Heart left ventricle (tissue), 16 donors: ENCODE measurements at regions of chr11 and their contacts with region 1.

Region 1: GRCh38 chr11:13216019-13216710 is 61.4 kb upstream of the BMAL1 start:
- DNase-seq: peak in 2 of 5 donors; percentile 33 to 55
- ATAC-seq: peak in 2 of 4 donors; percentile 33 to 45
- H3K4me3 ChIP-seq: no peak overlapping the region
- H3K27ac ChIP-seq: peak overlapping the region in 1 of 12 donors; percentile 4
- H3K4me1 ChIP-seq: peaks cover 0 to 13% (median 0%) of the 10 kb centered on the region in 12 donors
- H3K27me3 ChIP-seq: no peaks in the 10 kb centered on the region
- CTCF ChIP-seq: no peak
- POLR2A ChIP-seq: no peak

Region 2: DNA sequence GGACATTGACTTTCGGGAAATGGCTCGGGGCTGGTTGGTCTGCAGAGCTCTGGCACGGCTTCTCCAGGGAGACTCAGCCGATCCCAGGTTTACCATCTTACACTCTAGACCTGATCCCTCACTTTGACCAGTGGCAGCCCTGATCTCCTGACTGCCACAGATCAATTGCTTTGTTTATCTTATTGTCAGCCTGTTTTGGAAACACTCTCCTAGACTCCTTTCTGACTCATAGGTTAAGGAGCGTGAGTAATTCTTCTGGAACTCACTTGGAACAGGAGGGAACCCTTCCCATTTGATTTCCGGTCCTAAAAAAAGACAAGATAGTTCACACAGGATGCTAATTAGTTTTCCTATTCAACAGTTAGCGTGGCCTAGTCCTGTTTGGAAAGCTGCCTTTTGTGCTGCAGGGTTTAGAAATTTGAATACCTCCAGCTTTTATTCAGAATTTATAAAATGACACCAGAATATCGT is 45.5 kb after region 1 on chr11:
- intact Hi-C with region 1: loop called in 1 of 10 experiments (anchors 5 kb)
- DNase-seq: no peak
- ATAC-seq: peak; percentile 68 to 92 (median 87)
- H3K4me3 ChIP-seq: peak overlapping the region in 1 of 12 donors; percentile 4
- H3K27ac ChIP-seq: peak overlapping the region; percentile 33 to 94 (median 76)
- H3K4me1 ChIP-seq: peaks cover 0 to 34% (median 20%) of the 10 kb centered on the region in 12 donors
- H3K27me3 ChIP-seq: no peaks in the 10 kb centered on the region
- CTCF ChIP-seq: no peak
- POLR2A ChIP-seq: no peak

Region 3: GRCh38 chr11:13368041-13368446 is 151.9 kb after region 1 on chr11:
- intact Hi-C with region 1: no loop called
- DNase-seq: no peak
- ATAC-seq: no peak
- H3K4me3 ChIP-seq: no peak overlapping the region
- H3K27ac ChIP-seq: no peak overlapping the region
- H3K4me1 ChIP-seq: no peaks in the 10 kb centered on the region
- H3K27me3 ChIP-seq: no peaks in the 10 kb centered on the region
- CTCF ChIP-seq: no peak
- POLR2A ChIP-seq: no peak